Mucosa of descending colon (tissue), 3 donors: ENCODE measurements at regions of chr1 and their contacts with region 1.

Region 1: DNA sequence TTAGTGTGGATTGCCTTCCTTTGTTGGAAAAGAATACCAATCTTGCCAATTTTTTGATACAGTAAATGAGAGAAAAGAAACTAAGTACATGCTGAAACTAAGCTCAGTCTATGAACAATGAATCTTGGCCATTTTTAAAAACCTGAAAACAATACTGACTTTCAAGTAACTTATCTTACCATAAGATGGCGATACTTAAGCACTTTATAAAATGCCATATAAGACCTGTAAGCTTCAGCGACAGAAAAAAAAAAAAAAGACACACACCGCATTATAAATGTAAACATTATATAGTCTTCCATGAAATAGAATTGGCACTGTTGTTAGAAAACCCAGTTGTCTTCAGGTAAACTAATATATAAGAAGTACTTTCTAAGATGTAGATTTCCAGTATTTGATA is 3.0 kb downstream of the OLFM3 start:
- DNase-seq: no peak
- ATAC-seq: no peak
- H3K4me3 ChIP-seq: no peak overlapping the region
- H3K4me1 ChIP-seq: no peaks in the 10 kb centered on the region
- CTCF ChIP-seq: no peak

Region 2: DNA sequence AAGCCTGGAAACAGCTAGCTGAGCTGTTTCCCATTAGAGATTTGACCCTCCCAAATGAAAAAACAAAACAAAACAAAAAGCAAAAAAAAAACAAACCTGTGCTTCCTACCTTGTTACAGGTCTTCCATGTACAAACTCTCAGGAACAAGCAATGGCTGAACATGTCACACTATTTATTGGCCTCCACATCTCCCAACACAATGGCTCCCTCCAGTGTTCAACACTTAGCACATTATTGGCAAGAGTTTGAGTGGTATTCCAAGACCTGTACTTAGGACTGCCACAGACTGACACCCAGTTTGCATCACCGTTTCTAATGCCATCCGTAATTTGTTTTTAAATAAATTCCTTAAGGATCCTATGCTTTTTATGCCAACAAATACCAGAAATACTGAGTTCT is 198.0 kb after region 1 on chr1:
- intact Hi-C with region 1: loop called in 1 of 2 experiments (anchors 5 kb)
- DNase-seq: peak in 1 of 3 donors; percentile 37
- ATAC-seq: peak; percentile 76
- H3K4me3 ChIP-seq: no peak overlapping the region
- H3K4me1 ChIP-seq: no peaks in the 10 kb centered on the region
- CTCF ChIP-seq: no peak